HEK293 (cell line): ENCODE measurements at regions of chr16 and their contacts with region 1.

Region 1: DNA sequence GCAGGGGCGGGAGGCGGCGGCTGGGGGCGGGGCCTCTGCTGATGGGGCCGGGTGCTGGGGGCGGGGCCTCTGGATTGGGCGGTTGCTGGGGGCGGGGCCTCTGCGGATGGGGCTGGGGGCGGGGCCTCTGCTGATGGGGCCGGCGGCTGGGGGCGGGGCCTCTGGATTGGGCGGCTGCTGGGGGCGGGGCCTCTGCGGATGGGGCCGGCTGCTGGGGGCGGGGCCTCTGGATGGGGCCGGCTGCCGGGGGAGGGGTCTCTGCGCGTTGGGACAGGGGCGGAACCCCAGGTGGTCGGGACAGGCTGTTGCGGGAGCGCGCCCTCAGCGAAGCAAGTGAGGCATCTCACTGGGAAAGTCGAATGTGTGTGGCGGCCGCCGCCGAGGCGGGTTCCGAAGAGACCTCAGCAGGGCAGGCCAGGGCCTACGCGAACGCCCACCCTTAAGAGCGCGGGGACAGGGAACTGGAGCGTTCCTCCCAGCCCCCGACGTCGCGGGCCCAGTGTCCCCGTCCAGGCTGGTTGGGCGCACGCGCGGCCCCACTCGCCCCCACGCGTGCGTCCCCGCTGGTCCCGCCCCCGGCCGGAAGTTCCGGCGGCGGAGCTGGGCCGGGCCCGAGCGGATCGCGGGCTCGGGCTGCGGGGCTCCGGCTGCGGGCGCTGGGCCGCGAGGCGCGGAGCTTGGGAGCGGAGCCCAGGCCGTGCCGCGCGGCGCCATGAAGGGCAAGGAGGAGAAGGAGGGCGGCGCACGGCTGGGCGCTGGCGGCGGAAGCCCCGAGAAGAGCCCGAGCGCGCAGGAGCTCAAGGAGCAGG is at the start of gene STUB1:
- H3K4me3 ChIP-seq: peak within 1 kb of the TSS; percentile 82
- H3K27ac ChIP-seq: peak within 1 kb of the TSS; percentile 97
- H3K4me1 ChIP-seq: peaks cover 14% of the 10 kb centered on the region; the same call in 1 of the 2 replicates
- CTCF ChIP-seq: no peak

Region 2: GRCh38 chr16:495127-495748 is 184.8 kb before region 1 on chr16:
- CTCF ChIA-PET with region 1: no interaction called
- POLR2A ChIA-PET with region 1: no interaction called
- H3K4me3 ChIP-seq: no peak overlapping the region
- H3K27ac ChIP-seq: no peak overlapping the region
- H3K4me1 ChIP-seq: no peaks in the 10 kb centered on the region
- CTCF ChIP-seq: peak; percentile 32; the same call in 1 of the 2 replicates

Region 3: GRCh38 chr16:667780-668518 is 12.1 kb before region 1 on chr16 and contains the start of gene RHOT2:
- CTCF ChIA-PET with region 1: interaction called, 8 read pairs
- POLR2A ChIA-PET with region 1: interaction called, 57 read pairs
- H3K4me3 ChIP-seq: peak within 1 kb of the TSS; percentile 90
- H3K27ac ChIP-seq: peak within 1 kb of the TSS; percentile 92
- H3K4me1 ChIP-seq: no peaks in the 10 kb centered on the region
- CTCF ChIP-seq: peak; percentile 56; the same call in 1 of the 2 replicates

Region 4: GRCh38 chr16:867461-868385 is 187.7 kb after region 1 on chr16:
- CTCF ChIA-PET with region 1: no interaction called
- POLR2A ChIA-PET with region 1: no interaction called
- H3K4me3 ChIP-seq: no peak overlapping the region
- H3K27ac ChIP-seq: no peak overlapping the region
- H3K4me1 ChIP-seq: no peaks in the 10 kb centered on the region
- CTCF ChIP-seq: no peak